ENCODE measurements at regions of chr3 and their contacts with region 1.

Region 1: DNA sequence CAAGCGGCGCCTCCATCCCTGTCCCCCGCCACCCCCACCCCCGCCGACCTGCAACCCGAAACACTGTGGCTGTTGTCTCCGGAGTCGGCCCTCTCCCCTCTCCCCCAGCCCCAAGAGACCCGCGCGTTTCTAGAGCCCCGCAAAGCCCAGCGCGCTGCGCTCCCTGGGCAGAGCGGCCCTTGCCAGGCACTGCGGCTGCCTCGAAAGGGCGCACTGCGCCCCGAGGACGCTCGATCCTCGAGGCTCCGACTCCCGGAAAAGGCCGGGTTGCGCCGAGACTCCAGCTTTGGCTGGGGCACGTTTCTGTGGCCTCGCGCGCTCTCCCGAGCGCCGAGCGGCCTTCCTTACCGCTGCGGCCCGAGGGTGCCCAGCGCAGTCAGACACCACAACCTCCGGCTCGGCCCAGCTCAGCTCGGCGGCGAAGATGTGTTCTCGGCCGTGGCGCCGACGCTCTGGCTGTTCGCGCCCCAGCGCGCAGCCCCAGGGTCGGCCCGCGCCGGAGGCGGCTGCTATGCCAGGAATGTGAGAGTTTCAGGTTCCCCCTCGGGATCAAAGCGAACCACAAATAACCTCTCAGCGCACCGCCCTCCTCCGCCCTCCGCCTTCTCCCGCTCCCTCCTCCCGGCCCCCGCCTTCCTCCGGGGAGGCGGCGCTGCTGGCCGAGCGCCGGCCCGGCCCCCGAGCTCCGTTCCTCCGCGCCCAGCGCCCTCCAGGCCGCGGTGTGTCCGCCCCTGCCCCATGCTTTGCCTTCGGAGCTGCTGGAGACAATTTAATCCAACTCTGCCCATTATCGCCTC is at the start of gene AMOTL2:
- H3K4me3 ChIP-seq: peak within 1 kb of the TSS; percentile 89
- H3K27ac ChIP-seq: peak within 1 kb of the TSS; percentile 90
- H3K4me1 ChIP-seq: peaks cover 2% of the 10 kb centered on the region; the same call in 1 of the 2 replicates
- CTCF ChIP-seq: no peak

Region 2: GRCh38 chr3:134333522-134334181 is 40.5 kb before region 1 on chr3:
- CTCF ChIA-PET with region 1: interaction called, 5 read pairs
- POLR2A ChIA-PET with region 1: interaction called, 14 read pairs
- H3K4me3 ChIP-seq: no peak overlapping the region
- H3K27ac ChIP-seq: no peak overlapping the region
- H3K4me1 ChIP-seq: no peaks in the 10 kb centered on the region
- CTCF ChIP-seq: no peak

Region 3: DNA sequence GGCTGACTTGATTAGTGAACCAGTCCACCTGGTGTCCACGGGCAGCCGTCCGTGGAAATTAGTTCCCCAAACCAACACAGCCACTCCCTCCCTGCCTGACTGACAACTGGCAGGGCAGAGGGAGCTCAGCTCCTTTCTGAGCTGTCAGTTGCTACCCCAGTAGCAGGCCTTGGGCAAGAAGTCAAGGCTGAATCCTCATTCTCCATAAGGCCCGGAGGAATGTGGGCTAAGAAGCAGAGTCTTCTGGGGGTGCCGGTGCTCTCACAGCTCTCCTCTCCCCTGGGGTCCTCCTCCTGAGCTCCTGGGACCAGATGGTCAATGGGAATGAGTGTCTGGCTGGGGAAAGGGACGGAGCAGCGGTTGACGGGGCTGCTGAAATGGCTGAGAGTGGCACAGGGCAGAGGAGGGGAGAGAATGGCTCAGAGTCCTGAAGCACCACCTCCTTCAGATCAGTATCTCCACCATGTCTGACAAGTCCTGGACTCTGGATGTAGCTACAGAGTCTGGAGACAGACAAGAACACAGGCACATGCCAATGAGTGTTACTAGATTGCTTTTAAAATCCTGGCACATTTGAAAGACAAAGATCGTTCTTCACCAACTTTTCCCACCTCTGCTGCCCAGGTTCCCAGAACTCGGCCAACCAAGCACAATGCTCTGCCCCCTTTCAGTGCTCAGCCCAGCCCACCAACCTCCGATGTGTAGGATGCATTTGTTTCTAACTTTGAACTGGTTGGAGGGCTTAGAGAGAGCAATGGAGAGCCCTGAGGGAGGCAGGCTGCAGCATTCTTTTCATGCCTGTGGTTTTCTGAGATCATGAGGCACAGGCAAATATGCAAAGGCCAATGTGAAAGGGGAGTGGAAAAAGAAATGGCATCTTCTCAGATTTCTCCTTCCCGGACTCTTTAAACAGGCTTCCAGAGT is 16.7 kb before region 1 on chr3:
- CTCF ChIA-PET with region 1: interaction called, 6 read pairs
- POLR2A ChIA-PET with region 1: interaction called, 76 read pairs
- H3K4me3 ChIP-seq: no peak overlapping the region
- H3K27ac ChIP-seq: no peak overlapping the region
- H3K4me1 ChIP-seq: no peaks in the 10 kb centered on the region; the same call in 1 of the 2 replicates
- CTCF ChIP-seq: no peak

Measured in HEK293 (cell line).